ENCODE measurements at regions of chr3 and their contacts with region 1.

Region 1: GRCh38 chr3:113736548-113737089 is 9.4 kb downstream of the NAA50 start:
- DNase-seq: no peak
- ATAC-seq: peak; percentile 53 to 76 (median 63)
- H3K4me3 ChIP-seq: no peak overlapping the region
- H3K27ac ChIP-seq: peak overlapping the region in 1 of 12 donors; percentile 15
- H3K4me1 ChIP-seq: peaks cover 0 to 39% (median 16%) of the 10 kb centered on the region in 12 donors
- H3K27me3 ChIP-seq: no peaks in the 10 kb centered on the region
- CTCF ChIP-seq: peak; percentile 40 to 80 (median 68)
- POLR2A ChIP-seq: no peak

Region 2: GRCh38 chr3:113696658-113697499 is 39.7 kb before region 1 on chr3:
- intact Hi-C with region 1: loop called in 2 of 10 experiments (anchors 5 kb)
- DNase-seq: peak; percentile 99 to 100 (median 99)
- ATAC-seq: peak; percentile 96 to 99 (median 97)
- H3K4me3 ChIP-seq: peak overlapping the region; percentile 56 to 100 (median 87)
- H3K27ac ChIP-seq: peak overlapping the region; percentile 96 to 100 (median 100)
- H3K4me1 ChIP-seq: peaks cover 2 to 45% (median 26%) of the 10 kb centered on the region in 12 donors
- H3K27me3 ChIP-seq: no peaks in the 10 kb centered on the region
- CTCF ChIP-seq: peak in 7 of 12 donors; percentile 23 to 54 (median 29)
- POLR2A ChIP-seq: no peak

Region 3: GRCh38 chr3:113838631-113839209 is 102.1 kb after region 1 on chr3 and contains the start of gene GRAMD1C:
- intact Hi-C with region 1: loop called in 5 of 10 experiments (anchors 2 to 10 kb)
- DNase-seq: peak; percentile 85 to 94 (median 86)
- ATAC-seq: peak; percentile 68 to 100 (median 98)
- H3K4me3 ChIP-seq: peak within 1 kb of the TSS; percentile 33 to 66 (median 56)
- H3K27ac ChIP-seq: peak within 1 kb of the TSS in 7 of 12 donors; percentile 5 to 61 (median 49)
- H3K4me1 ChIP-seq: peaks cover 0 to 8% (median 0%) of the 10 kb centered on the region in 12 donors
- H3K27me3 ChIP-seq: no peaks in the 10 kb centered on the region
- CTCF ChIP-seq: peak; percentile 71 to 94 (median 87)
- POLR2A ChIP-seq: peak in 1 of 2 donors; percentile 21
- total RNA-seq, gene GRAMD1C: 0.49 to 5.6 (median 1.2) TPM

Region 4: GRCh38 chr3:113912552-113913236 is 176.1 kb after region 1 on chr3:
- intact Hi-C with region 1: loop called in 3 of 10 experiments (anchors 5 to 10 kb)
- DNase-seq: no peak
- ATAC-seq: peak in 1 of 4 donors; percentile 57
- H3K4me3 ChIP-seq: no peak overlapping the region
- H3K27ac ChIP-seq: no peak overlapping the region
- H3K4me1 ChIP-seq: peaks cover 0 to 9% (median 0%) of the 10 kb centered on the region in 12 donors
- H3K27me3 ChIP-seq: no peaks in the 10 kb centered on the region
- CTCF ChIP-seq: peak in 10 of 12 donors; percentile 12 to 52 (median 42)
- POLR2A ChIP-seq: no peak